ENCODE measurements at regions of chr6 and their contacts with region 1.

Region 1: DNA sequence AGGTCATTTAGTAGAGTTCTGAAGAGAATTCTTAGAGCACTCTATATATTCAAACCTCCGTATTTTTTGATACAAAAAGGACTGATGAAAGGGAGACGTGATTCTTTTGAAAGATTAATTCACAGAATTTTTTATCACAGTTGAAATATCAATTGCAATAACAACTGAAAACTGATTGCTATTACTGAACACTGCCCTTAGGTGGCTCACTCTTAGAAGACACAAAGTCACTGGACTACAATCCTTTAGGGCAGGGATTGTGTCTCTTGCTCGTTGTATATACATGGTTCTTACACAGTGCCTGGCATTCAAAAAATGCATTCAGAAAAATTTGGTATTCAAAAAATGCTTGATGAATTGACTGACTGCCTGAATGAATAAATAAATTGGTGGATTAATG is 17.1 kb upstream of the CALHM6 start:
- DNase-seq: no peak
- H3K4me3 ChIP-seq: no peak overlapping the region
- H3K27me3 ChIP-seq: no peaks in the 10 kb centered on the region
- CTCF ChIP-seq: peak; percentile 54

Region 2: GRCh38 chr6:116424001-116424400 is 20.1 kb before region 1 on chr6:
- CTCF ChIA-PET with region 1: interaction called, 5 read pairs
- POLR2A ChIA-PET with region 1: interaction called, 10 read pairs
- DNase-seq: no peak
- H3K4me3 ChIP-seq: no peak overlapping the region
- H3K27me3 ChIP-seq: no peaks in the 10 kb centered on the region
- CTCF ChIP-seq: no peak